GM12878 (cell line): ENCODE measurements at regions of chr18 and their contacts with region 1.

Region 1: GRCh38 chr18:7953095-7953958 is 386.2 kb downstream of the PTPRM start:
- DNase-seq: peak; percentile 91
- ATAC-seq: peak; percentile 95
- H3K4me3 ChIP-seq: no peak overlapping the region
- H3K27ac ChIP-seq: 0 out of 2 replicates have a peak overlapping the region, but pooled peaks have one; percentile 31
- H3K4me1 ChIP-seq: no peaks in the 10 kb centered on the region
- H3K27me3 ChIP-seq: no peaks in the 10 kb centered on the region
- CTCF ChIP-seq: no peak
- EP300 ChIP-seq: peak; percentile 96 to 97
- POLR2A ChIP-seq: no peak
- RAD21 ChIP-seq: no peak

Region 2: GRCh38 chr18:7885865-7886264 is 67.5 kb before region 1 on chr18:
- CTCF ChIA-PET with region 1: no interaction called
- POLR2A ChIA-PET with region 1: interaction called, 4 read pairs
- RAD21 ChIA-PET with region 1: interaction called, 3 read pairs
- SMC1A ChIA-PET with region 1: interaction called, 12 read pairs
- in situ Hi-C with region 1: no loop called
- intact Hi-C with region 1: no loop called
- DNase-seq: no peak
- ATAC-seq: peak; percentile 40
- H3K4me3 ChIP-seq: no peak overlapping the region
- H3K27ac ChIP-seq: no peak overlapping the region
- H3K4me1 ChIP-seq: no peaks in the 10 kb centered on the region
- H3K27me3 ChIP-seq: no peaks in the 10 kb centered on the region
- CTCF ChIP-seq: no peak
- EP300 ChIP-seq: no peak
- POLR2A ChIP-seq: no peak
- RAD21 ChIP-seq: no peak